Caco-2 (cell line): ENCODE measurements at regions of chr20 and their contacts with region 1.

Region 1: GRCh38 chr20:18466894-18467730 is at the starts of genes DZANK1 and POLR3F:
- DNase-seq: peak; percentile 98
- H3K4me3 ChIP-seq: peak within 1 kb of the TSS; percentile 82
- H3K4me3 Mint-ChIP-seq: peak within 1 kb of the TSS; percentile 98
- H3K27ac Mint-ChIP-seq: peak within 1 kb of the TSS; percentile 100
- H3K4me1 ChIP-seq: peaks cover 6% of the 10 kb centered on the region; the same call in 1 of the 2 replicates
- H3K4me1 Mint-ChIP-seq: peaks cover 17% of the 10 kb centered on the region
- H3K27me3 ChIP-seq: no peaks in the 10 kb centered on the region
- H3K27me3 Mint-ChIP-seq: no peaks in the 10 kb centered on the region
- CTCF ChIP-seq: no peak
- total RNA-seq, gene DZANK1: 8.6 and 9.6 TPM in 2 replicates
- total RNA-seq, gene POLR3F: 13.7 and 15.7 TPM in 2 replicates

Region 2: GRCh38 chr20:18431206-18431605 is 35.9 kb before region 1 on chr20:
- CTCF ChIA-PET with region 1: no interaction called
- POLR2A ChIA-PET with region 1: interaction called, 3 read pairs
- intact Hi-C with region 1: loop called (anchors 5 kb)
- DNase-seq: peak; percentile 70 to 81
- H3K4me3 ChIP-seq: no peak overlapping the region
- H3K4me3 Mint-ChIP-seq: no peak overlapping the region
- H3K27ac Mint-ChIP-seq: no peak overlapping the region
- H3K4me1 ChIP-seq: peaks cover 9% of the 10 kb centered on the region
- H3K4me1 Mint-ChIP-seq: no peaks in the 10 kb centered on the region
- H3K27me3 ChIP-seq: no peaks in the 10 kb centered on the region
- H3K27me3 Mint-ChIP-seq: no peaks in the 10 kb centered on the region
- CTCF ChIP-seq: peak in 1 of 2 experiments; percentile 76

Region 3: DNA sequence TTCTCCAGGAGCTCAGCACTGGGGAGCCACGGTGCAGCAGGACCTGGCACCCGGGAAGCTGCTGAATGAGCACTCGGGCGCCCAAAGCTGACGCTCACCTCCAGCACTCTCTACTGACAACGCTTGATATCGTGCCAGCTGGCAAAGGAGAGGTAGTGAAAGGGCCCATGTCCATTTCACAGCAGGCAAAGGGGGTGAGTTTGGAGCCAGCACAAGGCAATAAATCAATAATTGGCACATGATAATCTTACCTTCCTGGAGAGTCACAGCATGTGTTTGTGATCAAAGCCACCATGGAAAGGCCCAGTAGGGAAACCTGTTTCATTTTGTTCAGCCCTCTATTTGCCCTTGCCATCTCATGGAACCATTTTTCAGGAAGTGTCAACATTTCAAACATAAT is 76.8 kb after region 1 on chr20:
- CTCF ChIA-PET with region 1: no interaction called
- POLR2A ChIA-PET with region 1: no interaction called
- intact Hi-C with region 1: no loop called
- DNase-seq: no peak
- H3K4me3 ChIP-seq: no peak overlapping the region
- H3K4me3 Mint-ChIP-seq: no peak overlapping the region
- H3K27ac Mint-ChIP-seq: peak overlapping the region; percentile 9
- H3K4me1 ChIP-seq: no peaks in the 10 kb centered on the region
- H3K4me1 Mint-ChIP-seq: no peaks in the 10 kb centered on the region
- H3K27me3 ChIP-seq: no peaks in the 10 kb centered on the region
- H3K27me3 Mint-ChIP-seq: no peaks in the 10 kb centered on the region
- CTCF ChIP-seq: no peak